B cell (primary cell): ENCODE measurements at regions of chr7 and their contacts with region 1.

Region 1: GRCh38 chr7:151244196-151244840 is 4.2 kb downstream of the SMARCD3 start:
- DNase-seq: peak; percentile 68
- ATAC-seq: peak; percentile 12
- H3K4me3 ChIP-seq: peak overlapping the region in 3 of 5 experiments; percentile 47 to 55 (median 51)
- H3K4me3 Mint-ChIP-seq: peak overlapping the region; percentile 81
- H3K27ac ChIP-seq: no peak overlapping the region
- H3K27ac Mint-ChIP-seq: no peak overlapping the region
- H3K4me1 ChIP-seq: peaks cover 41 to 47% of the 10 kb centered on the region in 2 donors
- H3K4me1 Mint-ChIP-seq: peaks cover 41% of the 10 kb centered on the region
- H3K27me3 ChIP-seq: peaks cover 0 to 40% (median 17%) of the 10 kb centered on the region in 4 experiments
- H3K27me3 Mint-ChIP-seq: peaks cover 9% of the 10 kb centered on the region
- CTCF ChIP-seq: peak; percentile 79

Region 2: DNA sequence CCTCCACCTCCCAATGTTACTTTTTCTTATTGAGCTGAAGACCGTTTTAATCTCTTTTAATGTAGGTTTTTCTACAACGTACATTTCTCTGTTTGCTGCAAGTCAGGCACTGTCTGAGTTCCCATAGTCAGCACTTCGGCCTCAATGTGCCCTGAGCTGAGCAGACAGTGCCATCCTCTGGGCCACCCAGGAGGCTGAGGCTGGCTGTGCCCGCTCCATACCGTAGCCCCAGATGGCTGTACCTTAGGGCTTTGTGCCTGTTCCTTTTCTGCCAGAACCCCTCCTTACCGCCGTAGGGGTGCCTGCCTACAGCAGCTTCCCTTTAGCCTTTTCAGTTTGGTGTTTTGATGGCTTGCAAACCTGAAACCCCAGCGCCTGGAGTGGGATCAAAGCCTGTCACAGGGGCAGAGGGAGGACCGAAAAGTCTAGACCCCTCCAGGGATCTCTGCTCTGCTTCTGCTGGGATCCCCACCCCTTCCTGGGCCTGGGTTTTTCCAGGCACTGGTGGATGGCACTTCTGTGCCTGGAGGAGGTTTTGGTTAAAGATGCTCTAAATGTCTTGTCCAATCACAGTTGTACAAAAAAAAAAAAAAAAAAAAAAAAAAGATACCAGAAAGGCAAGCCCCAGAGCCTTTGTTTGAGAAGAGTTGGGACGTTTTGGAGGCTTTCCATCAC is 149.1 kb before region 1 on chr7:
- CTCF ChIA-PET with region 1: no interaction called
- POLR2A ChIA-PET with region 1: no interaction called
- intact Hi-C with region 1: no loop called
- DNase-seq: no peak
- ATAC-seq: no peak
- H3K4me3 ChIP-seq: no peak overlapping the region
- H3K4me3 Mint-ChIP-seq: no peak overlapping the region
- H3K27ac ChIP-seq: no peak overlapping the region
- H3K27ac Mint-ChIP-seq: no peak overlapping the region
- H3K4me1 ChIP-seq: no peaks in the 10 kb centered on the region
- H3K4me1 Mint-ChIP-seq: no peaks in the 10 kb centered on the region
- H3K27me3 ChIP-seq: peaks cover 0 to 3% (median 0%) of the 10 kb centered on the region in 4 experiments
- H3K27me3 Mint-ChIP-seq: peaks cover 7% of the 10 kb centered on the region
- CTCF ChIP-seq: no peak

Region 3: DNA sequence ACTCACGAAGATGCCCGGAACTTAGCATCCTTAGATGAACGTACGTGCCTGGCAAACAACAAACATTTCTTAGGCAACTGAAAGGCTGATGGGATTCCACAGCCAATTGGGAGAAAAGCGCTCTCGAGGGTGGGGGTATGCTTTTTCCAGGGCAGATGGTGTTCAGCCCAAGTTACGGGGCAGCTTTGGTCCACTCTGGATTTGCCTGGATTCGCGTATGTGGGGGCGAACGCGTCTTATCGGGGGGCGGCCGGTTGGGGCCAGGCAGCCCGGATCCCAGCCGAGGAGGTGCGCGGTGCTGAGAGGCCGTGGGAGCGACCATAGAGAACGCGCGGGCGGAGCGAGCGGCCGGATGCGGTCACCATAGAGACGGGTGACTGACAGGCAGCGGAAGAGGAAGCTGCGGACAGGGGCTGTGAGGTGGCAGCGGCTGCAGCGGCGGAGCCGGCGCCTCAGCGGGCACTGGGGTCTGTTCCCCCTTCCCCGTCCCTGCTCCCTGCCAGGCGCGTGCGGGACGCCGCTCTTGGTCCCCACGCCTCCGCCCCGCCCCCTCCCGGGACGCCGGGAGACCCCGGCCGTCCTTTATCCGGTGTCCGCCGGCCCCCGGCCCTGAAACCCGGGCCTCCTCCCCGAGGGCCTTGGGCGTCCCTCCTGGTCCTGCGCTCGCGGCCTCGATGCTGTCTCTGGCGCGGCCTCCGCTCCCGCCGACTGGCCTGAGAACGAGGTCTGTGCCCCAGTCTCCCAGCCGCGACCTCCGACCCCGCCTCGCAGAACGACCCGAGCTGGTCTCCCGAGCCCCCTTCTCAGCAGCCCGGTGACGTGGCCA is 12.0 kb before region 1 on chr7 and contains the start of gene CHPF2:
- CTCF ChIA-PET with region 1: interaction called, 34 read pairs
- POLR2A ChIA-PET with region 1: interaction called, 13 read pairs
- intact Hi-C with region 1: loop called (anchors 1 kb)
- DNase-seq: peak; percentile 91
- ATAC-seq: peak; percentile 94
- H3K4me3 ChIP-seq: peak within 1 kb of the TSS; percentile 64 to 96 (median 93)
- H3K4me3 Mint-ChIP-seq: peak within 1 kb of the TSS; percentile 99
- H3K27ac ChIP-seq: peak within 1 kb of the TSS; percentile 53 to 68
- H3K27ac Mint-ChIP-seq: peak within 1 kb of the TSS; percentile 97
- H3K4me1 ChIP-seq: peaks cover 22 to 30% of the 10 kb centered on the region in 2 donors
- H3K4me1 Mint-ChIP-seq: peaks cover 43% of the 10 kb centered on the region
- H3K27me3 ChIP-seq: no peaks in the 10 kb centered on the region
- H3K27me3 Mint-ChIP-seq: no peaks in the 10 kb centered on the region
- CTCF ChIP-seq: no peak
- total RNA-seq, gene CHPF2: 39.4 and 44.0 TPM in 2 replicates

Region 4: GRCh38 chr7:151304856-151305255 is 60.5 kb after region 1 on chr7:
- CTCF ChIA-PET with region 1: interaction called, 4 read pairs
- POLR2A ChIA-PET with region 1: no interaction called
- intact Hi-C with region 1: loop called (anchors 2 kb)
- DNase-seq: no peak
- ATAC-seq: no peak
- H3K4me3 ChIP-seq: no peak overlapping the region
- H3K4me3 Mint-ChIP-seq: no peak overlapping the region
- H3K27ac ChIP-seq: no peak overlapping the region
- H3K27ac Mint-ChIP-seq: no peak overlapping the region
- H3K4me1 ChIP-seq: peaks cover 7 to 13% of the 10 kb centered on the region in 2 donors
- H3K4me1 Mint-ChIP-seq: peaks cover 10% of the 10 kb centered on the region
- H3K27me3 ChIP-seq: peaks cover 0 to 57% (median 22%) of the 10 kb centered on the region in 4 experiments
- H3K27me3 Mint-ChIP-seq: peaks cover 37% of the 10 kb centered on the region
- CTCF ChIP-seq: no peak

Region 5: DNA sequence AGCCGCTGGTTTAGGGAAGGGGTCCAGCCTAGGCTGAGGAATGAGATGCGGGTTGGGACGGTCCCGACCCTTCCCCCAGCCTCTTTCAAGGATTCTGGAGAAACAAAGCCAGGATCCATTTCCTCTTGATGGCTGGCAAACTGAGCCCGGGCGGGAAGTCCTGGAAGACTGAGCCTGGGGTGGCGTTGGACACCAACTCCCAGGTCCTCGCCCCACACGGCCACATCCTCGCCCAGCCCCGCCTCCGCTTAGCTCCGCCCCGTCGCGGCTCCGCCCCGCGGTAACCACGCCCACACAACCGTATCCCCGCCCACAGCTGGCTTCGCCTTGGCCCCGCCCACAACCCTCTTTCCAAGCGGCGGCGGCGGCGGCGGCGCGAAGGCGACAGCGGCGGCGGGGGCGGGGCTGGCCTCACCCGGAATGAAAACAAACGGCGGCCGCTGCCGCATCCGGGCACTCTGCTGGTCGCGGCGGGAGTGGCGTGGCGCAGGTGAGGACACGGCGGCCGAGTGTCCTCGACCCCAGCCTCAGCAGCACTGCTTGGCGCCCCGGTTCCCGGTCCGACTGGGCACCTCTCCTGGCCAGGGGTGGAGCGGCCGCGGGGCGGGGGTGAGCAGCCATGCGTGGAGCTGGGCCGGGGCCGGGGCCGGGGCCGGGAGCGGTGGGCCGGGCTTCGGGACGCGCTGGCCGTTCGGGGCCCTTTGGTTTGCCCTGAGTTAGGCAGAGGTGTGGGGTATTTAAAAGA is 97.2 kb after region 1 on chr7 and contains the start of gene NUB1:
- CTCF ChIA-PET with region 1: no interaction called
- POLR2A ChIA-PET with region 1: no interaction called
- intact Hi-C with region 1: loop called (anchors 5 kb)
- DNase-seq: peak; percentile 93
- ATAC-seq: peak; percentile 95
- H3K4me3 ChIP-seq: peak within 1 kb of the TSS; percentile 62 to 100 (median 84)
- H3K4me3 Mint-ChIP-seq: peak within 1 kb of the TSS; percentile 88
- H3K27ac ChIP-seq: peak within 1 kb of the TSS; percentile 79 to 80
- H3K27ac Mint-ChIP-seq: peak within 1 kb of the TSS; percentile 95
- H3K4me1 ChIP-seq: peaks cover 29 to 36% of the 10 kb centered on the region in 2 donors
- H3K4me1 Mint-ChIP-seq: peaks cover 36% of the 10 kb centered on the region
- H3K27me3 ChIP-seq: no peaks in the 10 kb centered on the region
- H3K27me3 Mint-ChIP-seq: no peaks in the 10 kb centered on the region
- CTCF ChIP-seq: no peak
- total RNA-seq, gene NUB1: 95.4 and 104 TPM in 2 replicates

Region 6: DNA sequence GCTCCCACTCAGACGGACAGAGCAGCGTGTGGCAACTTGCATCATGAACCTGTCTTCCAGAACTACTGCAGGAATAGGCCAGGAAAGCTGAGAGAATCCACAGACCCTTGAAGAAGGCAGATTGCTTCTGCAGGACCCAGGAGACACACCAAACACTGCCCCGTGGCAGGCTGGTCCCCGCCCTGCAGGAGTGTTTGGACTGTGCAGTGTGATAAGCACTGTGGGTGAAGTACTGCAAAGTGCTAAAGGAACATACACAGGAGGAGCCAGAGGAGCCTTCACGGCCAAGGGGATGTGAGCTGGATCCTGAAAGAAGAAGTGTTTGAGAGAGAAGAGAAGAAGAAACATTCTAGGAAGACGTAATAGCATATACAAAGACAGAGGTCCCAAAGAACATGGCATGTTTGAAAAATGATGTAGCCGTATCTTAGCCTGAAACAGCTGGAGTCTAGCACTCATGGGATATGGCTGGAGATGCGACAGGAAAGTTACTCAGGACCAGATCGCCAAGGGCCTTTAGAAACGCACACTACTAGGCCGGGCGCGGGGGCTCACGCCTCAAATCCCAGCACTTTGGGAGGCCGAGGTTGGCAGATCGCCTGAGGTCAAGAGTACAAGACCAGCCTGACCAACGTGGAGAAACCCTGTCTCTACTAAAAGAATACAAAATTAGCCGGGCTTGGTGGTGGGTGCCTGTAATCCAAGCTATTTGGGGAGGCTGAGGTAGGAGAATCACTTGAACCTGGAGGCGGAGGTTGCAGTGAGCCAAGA is 372.3 kb after region 1 on chr7:
- CTCF ChIA-PET with region 1: no interaction called
- POLR2A ChIA-PET with region 1: no interaction called
- intact Hi-C with region 1: no loop called
- DNase-seq: no peak
- ATAC-seq: no peak
- H3K4me3 ChIP-seq: no peak overlapping the region
- H3K4me3 Mint-ChIP-seq: no peak overlapping the region
- H3K27ac ChIP-seq: no peak overlapping the region
- H3K27ac Mint-ChIP-seq: no peak overlapping the region
- H3K4me1 ChIP-seq: no peaks in the 10 kb centered on the region
- H3K4me1 Mint-ChIP-seq: peaks cover 2% of the 10 kb centered on the region
- H3K27me3 ChIP-seq: no peaks in the 10 kb centered on the region
- H3K27me3 Mint-ChIP-seq: no peaks in the 10 kb centered on the region
- CTCF ChIP-seq: no peak